ENCODE measurements at regions of chr1 and their contacts with region 1.

Region 1: DNA sequence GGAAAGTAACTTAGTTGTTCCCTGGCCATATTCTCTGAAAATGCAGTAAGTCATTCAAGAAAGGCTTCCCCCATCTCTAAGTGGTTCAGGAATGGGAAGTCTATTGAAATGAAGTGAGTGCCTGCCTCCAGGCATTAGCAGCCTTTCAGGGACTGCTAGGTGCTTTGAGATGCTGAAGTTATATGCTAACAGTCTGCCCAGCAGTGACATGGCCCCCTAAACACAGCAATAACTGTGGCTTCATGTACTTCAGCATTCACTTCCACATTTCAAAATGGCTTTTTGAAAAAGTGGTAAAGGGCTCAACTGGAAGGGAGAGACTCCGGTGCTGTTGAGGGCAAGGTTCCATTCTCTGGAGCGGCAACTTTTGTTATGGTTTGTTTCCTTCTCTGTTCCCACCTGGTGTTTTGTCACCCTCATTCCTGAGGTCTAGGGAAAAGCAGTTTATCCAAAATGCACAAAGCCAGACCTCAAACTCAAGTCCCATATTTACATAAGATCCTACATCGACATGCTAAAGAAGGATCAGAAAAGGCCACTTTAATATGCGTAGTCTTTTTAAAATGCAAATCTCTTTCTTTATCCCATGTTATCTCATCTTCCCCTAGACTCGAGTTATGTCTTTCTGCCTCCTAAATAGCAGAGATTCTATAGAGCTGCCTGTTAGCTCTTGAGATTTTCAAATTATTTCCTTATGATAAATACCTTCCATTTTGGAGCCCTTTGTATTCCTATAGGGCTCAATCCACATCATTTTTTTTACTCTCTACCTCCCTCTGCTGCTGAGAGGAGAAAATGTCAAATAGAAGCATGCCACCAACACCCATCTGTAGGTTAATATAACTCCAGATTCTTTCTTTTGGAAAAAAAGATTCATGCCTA is 34.2 kb upstream of the LRRC8C start:
- DNase-seq: peak; percentile 30 to 55 (median 43)
- H3K4me3 ChIP-seq: no peak overlapping the region
- H3K4me3 Mint-ChIP-seq: no peak overlapping the region
- H3K27ac ChIP-seq: no peak overlapping the region
- H3K27ac Mint-ChIP-seq: peak overlapping the region in 3 of 7 donors; percentile 7 to 29 (median 16)
- H3K4me1 ChIP-seq: peaks cover 2% of the 10 kb centered on the region in 2 donors
- H3K4me1 Mint-ChIP-seq: peaks cover 7% of the 10 kb centered on the region
- H3K27me3 ChIP-seq: no peaks in the 10 kb centered on the region
- H3K27me3 Mint-ChIP-seq: no peaks in the 10 kb centered on the region
- CTCF ChIP-seq: peak; percentile 90

Region 2: GRCh38 chr1:88640060-88640459 is 958.6 kb before region 1 on chr1:
- intact Hi-C with region 1: no loop called
- DNase-seq: no peak
- H3K4me3 ChIP-seq: no peak overlapping the region
- H3K4me3 Mint-ChIP-seq: no peak overlapping the region
- H3K27ac ChIP-seq: no peak overlapping the region
- H3K27ac Mint-ChIP-seq: no peak overlapping the region
- H3K4me1 ChIP-seq: no peaks in the 10 kb centered on the region
- H3K4me1 Mint-ChIP-seq: no peaks in the 10 kb centered on the region
- H3K27me3 ChIP-seq: no peaks in the 10 kb centered on the region
- H3K27me3 Mint-ChIP-seq: peaks cover 0 to 2% (median 1%) of the 10 kb centered on the region in 3 donors
- CTCF ChIP-seq: no peak

Region 3: DNA sequence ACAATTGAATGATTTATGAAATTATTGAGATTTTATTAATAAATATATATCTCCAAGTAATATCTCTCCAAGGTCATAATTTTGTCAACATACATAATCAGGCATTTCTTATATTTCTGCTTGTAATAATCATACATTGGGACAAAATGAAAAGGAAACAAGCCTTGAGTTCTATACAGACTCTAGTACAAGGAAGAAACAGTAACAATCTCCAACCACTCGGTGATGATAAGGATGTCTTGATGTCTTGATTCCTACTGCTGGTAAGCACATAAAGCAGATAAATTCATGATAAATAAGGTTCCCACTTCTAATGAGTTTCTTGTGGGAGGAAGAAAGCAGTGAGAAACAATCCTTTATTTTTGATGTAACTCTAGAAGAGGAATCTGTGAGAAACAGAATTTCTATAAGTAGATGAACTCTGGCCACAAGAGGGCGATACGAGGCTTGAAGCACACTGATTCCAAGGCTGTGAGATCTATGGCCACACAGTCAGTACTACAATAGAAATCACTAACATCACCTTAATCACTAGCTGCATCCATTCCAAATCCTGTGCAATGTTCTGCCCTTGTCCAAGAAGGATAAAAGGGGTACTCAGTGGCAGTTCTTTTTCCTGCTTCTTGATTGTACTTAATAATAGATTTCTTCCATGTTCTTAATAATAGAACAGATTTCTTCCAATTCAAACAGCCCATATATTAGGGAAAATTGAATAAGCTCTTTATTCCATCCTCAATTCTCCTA is 115.5 kb before region 1 on chr1:
- intact Hi-C with region 1: loop called in 1 of 2 experiments (anchors 5 kb)
- DNase-seq: peak; percentile 56 to 75 (median 70)
- H3K4me3 ChIP-seq: no peak overlapping the region
- H3K4me3 Mint-ChIP-seq: no peak overlapping the region
- H3K27ac ChIP-seq: no peak overlapping the region
- H3K27ac Mint-ChIP-seq: no peak overlapping the region
- H3K4me1 ChIP-seq: peaks cover under 1 to 16% of the 10 kb centered on the region in 2 donors
- H3K4me1 Mint-ChIP-seq: peaks cover 14% of the 10 kb centered on the region
- H3K27me3 ChIP-seq: no peaks in the 10 kb centered on the region
- H3K27me3 Mint-ChIP-seq: peaks cover 1 to 3% (median 2%) of the 10 kb centered on the region in 3 donors
- CTCF ChIP-seq: peak; percentile 87

Region 4: DNA sequence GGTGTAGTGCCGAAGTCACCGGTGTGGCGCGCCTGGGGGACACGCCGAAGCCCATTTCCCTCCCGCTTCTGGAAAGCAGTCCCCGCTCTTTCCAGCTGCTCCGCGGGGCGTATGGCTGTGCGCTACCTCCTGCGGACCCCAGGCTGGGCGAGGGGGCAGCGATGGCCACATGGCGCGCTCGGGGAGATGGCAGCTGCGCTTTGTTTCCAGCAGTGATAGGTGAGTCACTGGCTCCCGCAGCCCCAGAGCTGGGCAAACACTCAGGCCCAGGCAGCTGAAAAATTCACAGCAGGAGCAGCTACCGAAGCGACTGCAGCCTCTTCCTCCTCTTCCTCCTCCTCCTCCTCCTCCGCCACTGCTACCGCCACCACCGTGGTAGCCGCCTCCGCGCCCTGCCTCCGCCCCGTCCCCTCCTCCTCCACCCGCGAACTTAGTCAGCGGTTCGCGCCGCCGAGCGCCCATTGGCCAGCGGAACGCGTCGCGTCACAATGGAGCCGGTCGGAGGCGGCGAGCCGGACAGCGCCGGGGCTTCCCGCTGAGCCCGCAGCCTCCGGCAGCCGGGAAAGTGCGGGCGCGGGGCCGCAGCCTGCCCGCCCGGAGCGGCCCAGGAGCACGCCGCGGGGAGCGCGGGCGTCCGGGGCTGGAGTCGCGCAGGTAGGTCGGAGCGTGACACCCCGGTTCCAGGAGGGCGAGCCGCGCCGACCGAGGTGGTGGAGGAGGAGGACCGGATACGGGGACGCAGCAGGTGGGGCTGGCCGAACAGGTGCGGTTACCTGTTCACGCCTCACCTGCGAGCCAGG is 74.1 kb before region 1 on chr1 and contains the start of gene LRRC8B:
- intact Hi-C with region 1: loop called (anchors 2 to 5 kb)
- DNase-seq: peak; percentile 89 to 90 (median 90)
- H3K4me3 ChIP-seq: peak within 1 kb of the TSS; percentile 88 to 98 (median 92)
- H3K4me3 Mint-ChIP-seq: peak within 1 kb of the TSS; percentile 97 to 99
- H3K27ac ChIP-seq: peak within 1 kb of the TSS; percentile 81 to 98
- H3K27ac Mint-ChIP-seq: peak within 1 kb of the TSS; percentile 91 to 96 (median 92)
- H3K4me1 ChIP-seq: peaks cover 15 to 47% of the 10 kb centered on the region in 2 donors
- H3K4me1 Mint-ChIP-seq: peaks cover 28% of the 10 kb centered on the region
- H3K27me3 ChIP-seq: no peaks in the 10 kb centered on the region
- H3K27me3 Mint-ChIP-seq: peaks cover 0 to 1% (median 0%) of the 10 kb centered on the region in 3 donors
- CTCF ChIP-seq: no peak
- polyA plus RNA-seq, gene LRRC8B: 4.5 to 9.1 (median 7.9) TPM